Sigmoid colon (tissue), 7 donors: ENCODE measurements at regions of chr10 and their contacts with region 1.

Region 1: DNA sequence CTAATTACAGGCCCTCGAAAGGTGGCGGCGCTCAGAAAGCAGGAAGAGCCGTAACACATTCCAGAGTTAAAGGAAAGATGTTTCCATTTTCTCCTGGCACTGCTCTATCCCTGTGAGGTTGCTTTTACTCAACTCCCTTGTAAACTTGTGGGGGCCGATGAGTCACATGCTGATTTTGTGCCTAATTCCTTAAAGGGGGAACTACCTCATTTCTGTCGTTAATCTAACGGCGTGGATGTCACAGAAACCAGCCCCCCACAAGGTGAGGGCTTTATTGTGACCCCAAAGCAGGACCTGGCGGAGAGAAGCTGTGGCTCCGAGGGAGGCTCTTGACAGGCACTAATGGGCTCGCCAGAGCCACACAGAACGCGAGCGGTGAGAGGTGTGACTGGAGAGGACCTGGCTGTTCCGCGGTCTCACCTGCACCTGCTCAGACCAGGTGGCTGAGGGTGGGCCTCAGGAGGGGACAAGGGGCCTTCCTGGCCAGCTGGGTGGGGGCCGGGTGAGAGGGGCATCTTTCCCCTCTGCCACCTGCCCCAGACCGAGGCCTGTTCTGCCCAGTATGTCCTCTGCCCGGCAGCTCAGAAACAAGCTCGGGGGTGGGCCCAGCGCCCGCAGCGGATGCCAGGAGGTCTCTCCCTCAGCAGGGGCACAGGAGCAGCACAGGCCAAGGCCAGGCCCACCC is 50.9 kb downstream of the CALML3 start:
- DNase-seq: peak; percentile 82
- H3K4me3 ChIP-seq: peak overlapping the region in 1 of 4 donors; percentile 12
- H3K27ac ChIP-seq: peak overlapping the region; percentile 59 to 86 (median 75)
- H3K4me1 ChIP-seq: peaks cover 0 to 48% (median 37%) of the 10 kb centered on the region in 4 donors
- H3K27me3 ChIP-seq: no peaks in the 10 kb centered on the region
- CTCF ChIP-seq: no peak
- EP300 ChIP-seq: peak in 3 of 4 donors; percentile 17 to 79 (median 49)
- POLR2A ChIP-seq: no peak

Region 2: DNA sequence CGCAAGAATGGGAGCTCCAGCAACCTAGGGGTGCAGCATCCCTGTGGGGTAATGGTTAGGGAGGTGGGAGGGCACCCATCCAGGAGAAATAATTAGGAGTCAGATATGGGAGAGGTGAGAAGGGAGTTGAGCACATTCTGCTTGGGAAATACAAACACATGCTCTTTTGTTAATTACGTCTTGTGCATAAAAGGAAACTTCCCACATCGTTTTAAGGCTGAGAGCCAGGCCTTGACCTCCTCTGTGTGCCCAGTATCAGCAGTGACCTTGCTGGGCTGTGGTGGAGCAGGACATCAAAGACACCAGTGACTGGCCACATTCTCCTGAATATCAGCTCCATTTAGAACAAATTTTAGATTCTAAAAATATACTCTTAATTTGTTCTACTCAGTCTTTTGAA is 356.4 kb before region 1 on chr10:
- intact Hi-C with region 1: no loop called
- DNase-seq: no peak
- H3K4me3 ChIP-seq: no peak overlapping the region
- H3K27ac ChIP-seq: no peak overlapping the region
- H3K4me1 ChIP-seq: no peaks in the 10 kb centered on the region
- H3K27me3 ChIP-seq: no peaks in the 10 kb centered on the region
- CTCF ChIP-seq: no peak
- EP300 ChIP-seq: no peak
- POLR2A ChIP-seq: no peak

Region 3: DNA sequence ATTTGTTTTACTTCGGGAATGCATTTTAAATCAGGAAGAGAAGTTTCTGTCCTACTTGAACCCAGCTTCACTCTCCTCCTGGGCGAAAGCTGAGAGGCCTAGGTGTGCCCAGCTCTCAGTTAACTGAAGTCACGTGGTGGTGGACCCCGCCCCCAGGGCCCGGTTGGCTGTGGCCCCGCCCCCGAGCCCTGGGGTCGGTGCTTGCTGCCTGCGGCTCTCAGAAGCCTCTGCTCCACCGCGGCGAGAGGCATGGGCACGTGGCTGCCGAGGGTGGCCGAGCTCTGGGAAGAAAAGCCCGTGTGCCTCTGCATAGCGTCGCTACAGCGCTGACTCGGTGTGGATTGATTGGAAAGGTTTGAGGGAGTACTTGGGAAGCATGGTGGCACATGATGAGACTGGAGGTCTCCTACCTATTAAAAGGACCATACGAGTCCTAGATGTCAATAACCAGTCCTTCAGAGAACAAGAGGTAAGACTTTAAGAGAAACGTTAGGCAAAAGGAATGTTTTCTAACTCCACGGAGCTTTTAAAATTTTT is 129.2 kb before region 1 on chr10:
- intact Hi-C with region 1: loop called (anchors 5 kb)
- DNase-seq: peak; percentile 97
- H3K4me3 ChIP-seq: peak overlapping the region; percentile 53 to 63 (median 60)
- H3K27ac ChIP-seq: peak overlapping the region; percentile 79 to 84 (median 82)
- H3K4me1 ChIP-seq: peaks cover 0 to 23% (median 18%) of the 10 kb centered on the region in 4 donors
- H3K27me3 ChIP-seq: no peaks in the 10 kb centered on the region
- CTCF ChIP-seq: no peak
- EP300 ChIP-seq: no peak
- POLR2A ChIP-seq: peak; percentile 89 to 94

Region 4: GRCh38 chr10:5534880-5535856 is 40.5 kb before region 1 on chr10:
- intact Hi-C with region 1: loop called (anchors 5 kb)
- DNase-seq: peak; percentile 56
- H3K4me3 ChIP-seq: no peak overlapping the region
- H3K27ac ChIP-seq: peak overlapping the region in 2 of 4 donors; percentile 30 to 55
- H3K4me1 ChIP-seq: peaks cover 0 to 56% (median 31%) of the 10 kb centered on the region in 4 donors
- H3K27me3 ChIP-seq: no peaks in the 10 kb centered on the region
- CTCF ChIP-seq: no peak
- EP300 ChIP-seq: no peak
- POLR2A ChIP-seq: no peak

Region 5: GRCh38 chr10:6163364-6164270 is 588.0 kb after region 1 on chr10:
- intact Hi-C with region 1: loop called (anchors 10 kb)
- DNase-seq: peak; percentile 95
- H3K4me3 ChIP-seq: peak overlapping the region; percentile 62 to 73 (median 66)
- H3K27ac ChIP-seq: peak overlapping the region; percentile 90 to 97 (median 94)
- H3K4me1 ChIP-seq: peaks cover 0 to 38% (median 33%) of the 10 kb centered on the region in 4 donors
- H3K27me3 ChIP-seq: no peaks in the 10 kb centered on the region
- CTCF ChIP-seq: no peak
- EP300 ChIP-seq: peak in 2 of 4 donors; percentile 33 to 57
- POLR2A ChIP-seq: peak; percentile 52 to 61